Posterior vena cava (tissue), 2 donors: ENCODE measurements at regions of chr17 and their contacts with region 1.

Region 1: DNA sequence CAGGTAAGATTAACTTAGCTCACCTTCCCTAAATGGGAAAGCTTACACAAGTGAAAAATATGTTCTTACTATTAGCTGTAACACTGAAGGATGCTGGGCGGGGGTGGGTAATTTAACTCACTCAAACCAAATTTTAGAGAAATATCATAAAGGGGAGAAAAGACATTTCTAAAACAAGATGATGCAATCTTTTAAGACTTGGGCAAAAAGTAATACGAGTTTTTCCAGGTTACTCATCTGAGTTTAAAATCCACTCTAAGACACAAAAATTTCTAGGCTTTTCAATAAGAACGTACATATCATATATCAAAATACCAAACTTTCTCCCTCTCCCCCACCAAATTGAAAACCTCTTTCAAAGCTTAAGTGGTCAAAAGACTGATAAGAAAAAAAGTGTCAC is 228.8 kb downstream of the CEP112 start:
- DNase-seq: no peak

Region 2: DNA sequence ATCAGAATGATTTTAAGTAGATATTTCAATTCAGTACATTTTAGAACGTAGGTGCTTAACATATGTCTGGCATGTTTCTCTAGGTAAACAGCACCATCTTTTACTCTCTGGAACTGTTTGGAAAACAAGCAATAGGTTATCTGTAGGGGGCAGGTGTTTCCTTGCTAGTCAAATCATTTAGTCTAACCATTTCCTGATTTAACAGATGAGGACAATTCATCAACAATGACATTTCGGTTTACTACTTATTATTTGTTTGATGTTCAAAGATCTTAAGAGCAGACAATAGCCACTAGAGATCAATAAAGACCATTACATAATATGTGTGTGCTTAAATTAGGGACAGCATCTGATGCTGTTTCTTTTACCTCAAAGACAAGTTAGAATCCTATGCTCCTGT is 55.6 kb after region 1 on chr17:
- intact Hi-C with region 1: loop called in 1 of 2 experiments (anchors 2 kb)
- DNase-seq: no peak

Region 3: GRCh38 chr17:66032082-66032712 is 69.0 kb after region 1 on chr17:
- intact Hi-C with region 1: no loop called
- DNase-seq: no peak